ENCODE measurements at regions of chr10 and their contacts with region 1.

Region 1: GRCh38 chr10:35642027-35642792 is at the start of gene FZD8:
- DNase-seq: peak; percentile 95 to 96
- ATAC-seq: peak; percentile 94
- H3K4me3 ChIP-seq: peak within 1 kb of the TSS; percentile 59 to 79
- H3K27ac ChIP-seq: peak within 1 kb of the TSS; percentile 66 to 78
- H3K4me1 ChIP-seq: no peaks in the 10 kb centered on the region
- H3K27me3 ChIP-seq: no peaks in the 10 kb centered on the region
- total RNA-seq, gene FZD8: 8.2 to 28.6 TPM

Region 2: DNA sequence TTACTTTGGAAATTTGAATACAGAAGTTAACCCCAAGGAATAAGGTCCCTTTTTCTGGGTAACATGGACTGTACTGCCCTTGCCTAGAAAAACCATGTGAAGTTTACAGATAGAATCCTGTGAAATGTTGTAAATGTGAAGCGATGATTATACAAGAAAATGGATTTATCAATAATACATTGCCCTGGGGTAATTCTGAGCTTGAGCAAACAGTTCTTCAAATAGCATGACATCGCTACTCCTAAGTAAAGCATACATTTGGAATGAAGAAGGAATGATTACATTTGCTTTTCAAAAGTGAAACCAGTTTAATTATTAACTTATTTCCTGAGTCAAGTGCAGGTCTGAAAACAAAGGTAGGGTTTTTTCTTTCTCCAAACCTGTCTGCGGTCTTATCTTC is 43.2 kb after region 1 on chr10:
- intact Hi-C with region 1: no loop called
- DNase-seq: no peak
- ATAC-seq: no peak
- H3K4me3 ChIP-seq: no peak overlapping the region
- H3K27ac ChIP-seq: no peak overlapping the region
- H3K4me1 ChIP-seq: no peaks in the 10 kb centered on the region
- H3K27me3 ChIP-seq: no peaks in the 10 kb centered on the region

Region 3: DNA sequence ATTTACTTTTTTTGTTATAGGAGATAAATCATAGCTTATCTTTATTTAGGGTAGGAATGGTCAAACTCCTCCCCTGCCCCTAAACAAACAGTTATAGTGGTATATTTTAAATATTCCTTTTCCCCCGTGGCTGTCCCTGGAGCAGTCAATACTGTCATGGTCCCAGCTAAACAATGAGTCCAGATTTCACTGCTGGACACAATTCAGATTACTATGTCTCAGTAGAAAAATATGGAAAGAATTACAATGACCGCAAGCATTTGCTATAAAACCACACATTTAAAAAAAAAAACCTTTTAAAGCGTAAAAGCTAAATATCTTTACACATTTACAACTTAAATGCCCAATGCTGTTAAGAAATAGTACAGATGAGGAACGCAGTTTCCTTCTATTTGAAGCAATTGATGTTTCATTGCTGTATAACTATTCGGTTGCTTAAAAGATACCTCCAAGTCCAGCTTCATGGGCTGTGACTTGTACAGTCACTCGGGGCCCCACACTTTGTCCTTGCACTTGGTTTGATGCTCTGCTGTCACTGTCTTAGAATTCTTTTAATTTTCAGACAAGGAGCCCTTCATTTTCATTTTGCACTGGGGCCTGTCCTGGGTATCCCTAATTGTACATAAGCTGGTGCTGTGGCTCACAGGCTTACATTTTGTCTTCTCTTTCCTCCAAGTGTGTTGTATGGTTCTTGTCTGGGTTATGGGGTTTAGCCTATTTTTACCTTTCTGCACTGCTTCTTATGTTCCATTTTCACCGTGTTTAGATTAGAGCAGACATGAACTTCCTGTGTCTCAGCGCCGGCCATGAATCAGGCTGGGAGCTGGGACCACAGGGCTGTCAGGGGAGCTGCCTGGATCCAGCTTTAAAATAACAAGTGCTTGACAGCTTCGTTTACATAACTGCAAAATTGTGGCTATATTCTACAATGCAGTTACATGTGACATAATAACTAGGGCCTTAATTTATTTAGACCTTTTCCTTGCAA is 530.0 kb after region 1 on chr10:
- intact Hi-C with region 1: loop called in 1 of 2 experiments (anchors 10 kb)
- DNase-seq: peak in 1 of 2 donors; percentile 56
- ATAC-seq: peak; percentile 40
- H3K4me3 ChIP-seq: no peak overlapping the region
- H3K27ac ChIP-seq: peak overlapping the region; percentile 48 to 78
- H3K4me1 ChIP-seq: peaks cover 0 to 6% of the 10 kb centered on the region in 2 donors
- H3K27me3 ChIP-seq: no peaks in the 10 kb centered on the region

Region 4: DNA sequence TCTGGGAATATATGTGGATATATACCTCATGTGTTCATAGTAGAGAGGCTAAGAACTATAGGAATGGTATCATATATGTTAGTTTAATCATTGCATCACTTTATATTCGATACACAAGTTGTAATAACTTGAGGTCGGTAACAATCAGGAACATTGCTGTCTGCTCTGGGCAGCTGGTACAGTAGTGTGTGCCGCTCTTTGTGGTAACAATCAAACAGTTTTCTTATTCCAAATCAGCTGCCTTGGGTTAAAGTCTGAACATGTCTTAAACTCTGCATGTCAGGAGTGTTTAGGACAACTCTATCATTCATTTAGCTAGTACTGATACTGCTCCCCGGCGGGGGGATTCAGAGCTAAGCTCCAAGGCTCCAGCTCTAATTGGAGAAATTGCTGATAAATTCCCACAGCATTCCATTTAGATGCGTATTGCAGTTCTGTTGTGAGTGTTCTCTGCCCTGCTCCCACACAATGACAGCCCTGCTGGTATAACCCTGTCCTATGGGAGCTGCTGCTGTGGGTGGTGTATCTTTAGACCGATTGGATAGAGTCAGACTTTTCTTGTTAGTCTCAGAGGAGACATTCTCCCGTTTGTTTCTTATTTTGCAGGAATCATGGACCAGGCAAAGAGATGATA is 707.4 kb after region 1 on chr10:
- intact Hi-C with region 1: loop called in 1 of 2 experiments (anchors 10 kb)
- DNase-seq: peak in 1 of 2 donors; percentile 48
- ATAC-seq: no peak
- H3K4me3 ChIP-seq: no peak overlapping the region
- H3K27ac ChIP-seq: no peak overlapping the region
- H3K4me1 ChIP-seq: peaks cover 3 to 6% of the 10 kb centered on the region in 2 donors
- H3K27me3 ChIP-seq: no peaks in the 10 kb centered on the region

Region 5: GRCh38 chr10:36489611-36490228 is 847.5 kb after region 1 on chr10:
- intact Hi-C with region 1: loop called (anchors 5 kb)
- DNase-seq: peak in 1 of 2 donors; percentile 71
- ATAC-seq: peak; percentile 78
- H3K4me3 ChIP-seq: no peak overlapping the region
- H3K27ac ChIP-seq: peak overlapping the region; percentile 41 to 99
- H3K4me1 ChIP-seq: peaks cover 2 to 23% of the 10 kb centered on the region in 2 donors
- H3K27me3 ChIP-seq: no peaks in the 10 kb centered on the region

Region 6: GRCh38 chr10:36504758-36505157 is 862.5 kb after region 1 on chr10:
- intact Hi-C with region 1: loop called in 1 of 2 experiments (anchors 5 kb)
- DNase-seq: no peak
- ATAC-seq: no peak
- H3K4me3 ChIP-seq: no peak overlapping the region
- H3K27ac ChIP-seq: no peak overlapping the region
- H3K4me1 ChIP-seq: no peaks in the 10 kb centered on the region
- H3K27me3 ChIP-seq: no peaks in the 10 kb centered on the region

Measured in aorta (tissue), 5 donors.